Naive thymus-derived CD4-positive, alpha-beta T cell (primary cell): ENCODE measurements at regions of chr4 and their contacts with region 1.

Region 1: GRCh38 chr4:113750296-113750695 is 11.2 kb downstream of the CAMK2D start:
- DNase-seq: no peak
- ATAC-seq: no peak
- H3K4me3 ChIP-seq: no peak overlapping the region
- H3K4me3 Mint-ChIP-seq: no peak overlapping the region
- H3K27ac ChIP-seq: no peak overlapping the region
- H3K27ac Mint-ChIP-seq: peak overlapping the region in 2 of 9 donors; percentile 22 to 32
- H3K4me1 ChIP-seq: no peaks in the 10 kb centered on the region
- H3K4me1 Mint-ChIP-seq: peaks cover 13 to 51% (median 42%) of the 10 kb centered on the region in 7 donors
- H3K27me3 ChIP-seq: no peaks in the 10 kb centered on the region
- H3K27me3 Mint-ChIP-seq: no peaks in the 10 kb centered on the region

Region 2: GRCh38 chr4:113718252-113718651 is 32.0 kb before region 1 on chr4:
- CTCF ChIA-PET with region 1: no interaction called
- POLR2A ChIA-PET with region 1: no interaction called
- intact Hi-C with region 1: loop called in 1 of 2 experiments (anchors 5 kb)
- DNase-seq: no peak
- ATAC-seq: no peak
- H3K4me3 ChIP-seq: no peak overlapping the region
- H3K4me3 Mint-ChIP-seq: no peak overlapping the region
- H3K27ac ChIP-seq: no peak overlapping the region
- H3K27ac Mint-ChIP-seq: no peak overlapping the region
- H3K4me1 ChIP-seq: no peaks in the 10 kb centered on the region
- H3K4me1 Mint-ChIP-seq: peaks cover 11 to 56% (median 33%) of the 10 kb centered on the region in 7 donors
- H3K27me3 ChIP-seq: no peaks in the 10 kb centered on the region
- H3K27me3 Mint-ChIP-seq: no peaks in the 10 kb centered on the region

Region 3: GRCh38 chr4:113738251-113738650 is 12.0 kb before region 1 on chr4:
- CTCF ChIA-PET with region 1: no interaction called
- POLR2A ChIA-PET with region 1: no interaction called
- intact Hi-C with region 1: loop called in 1 of 2 experiments (anchors 1 kb)
- DNase-seq: no peak
- ATAC-seq: no peak
- H3K4me3 ChIP-seq: no peak overlapping the region
- H3K4me3 Mint-ChIP-seq: no peak overlapping the region
- H3K27ac ChIP-seq: no peak overlapping the region
- H3K27ac Mint-ChIP-seq: no peak overlapping the region
- H3K4me1 ChIP-seq: peaks cover 0 to 13% of the 10 kb centered on the region in 2 donors
- H3K4me1 Mint-ChIP-seq: peaks cover 21 to 80% (median 53%) of the 10 kb centered on the region in 7 donors
- H3K27me3 ChIP-seq: no peaks in the 10 kb centered on the region
- H3K27me3 Mint-ChIP-seq: no peaks in the 10 kb centered on the region